A549 (cell line): ENCODE measurements at regions of chr3 and their contacts with region 1.

Region 1: DNA sequence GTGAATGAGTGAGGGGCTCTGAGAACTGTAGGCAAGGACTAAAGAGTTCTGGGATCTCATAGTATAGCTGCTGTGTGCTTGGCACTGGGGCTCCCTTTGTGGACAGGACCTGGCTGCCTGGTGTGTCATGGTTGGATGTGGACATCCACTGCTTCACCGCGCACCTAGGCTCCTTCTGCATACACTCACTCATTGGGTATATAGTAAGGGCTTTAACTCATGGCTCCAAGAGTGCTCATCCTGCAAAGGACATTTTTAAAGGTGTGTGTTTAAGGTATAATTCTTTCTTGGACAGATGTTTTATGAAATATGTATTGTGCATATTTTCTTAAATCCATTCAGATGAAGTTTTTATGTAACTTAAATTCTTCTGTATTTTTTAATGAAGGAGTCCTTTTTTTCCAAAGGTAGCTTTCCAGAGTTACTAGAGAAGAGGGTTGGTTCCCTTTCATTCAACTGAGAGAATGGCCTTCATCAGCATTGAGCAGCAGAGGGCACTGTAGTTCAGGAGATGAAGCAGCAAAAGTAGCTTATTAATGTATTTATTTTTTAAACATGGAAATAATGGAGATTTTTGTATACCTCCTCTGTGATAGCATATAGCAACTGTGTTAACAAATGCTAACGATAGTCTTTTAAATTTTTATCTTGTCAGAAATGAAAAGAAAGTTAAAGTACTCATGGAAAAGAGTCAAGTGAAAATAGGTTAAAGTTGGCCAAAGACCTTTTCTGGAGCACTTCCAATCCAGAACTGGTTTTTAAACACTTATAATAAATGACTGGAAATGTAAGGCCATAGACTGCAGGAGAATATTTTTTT is 25.2 kb downstream of the OXNAD1 start:
- DNase-seq: peak; percentile 27 to 47
- ATAC-seq: peak; percentile 68 to 80; a peak in 4 of 6 replicates
- H3K4me3 ChIP-seq: no peak overlapping the region
- H3K27ac ChIP-seq: 0 out of 6 replicates have a peak overlapping the region, but pooled peaks of 1 of the 2 experiments have one; percentile 20
- H3K4me1 ChIP-seq: no peaks in the 10 kb centered on the region
- CTCF ChIP-seq: peak; percentile 94
- EP300 ChIP-seq: no peak
- POLR2A ChIP-seq: no peak
- RAD21 ChIP-seq: peak; percentile 91 to 92

Region 2: DNA sequence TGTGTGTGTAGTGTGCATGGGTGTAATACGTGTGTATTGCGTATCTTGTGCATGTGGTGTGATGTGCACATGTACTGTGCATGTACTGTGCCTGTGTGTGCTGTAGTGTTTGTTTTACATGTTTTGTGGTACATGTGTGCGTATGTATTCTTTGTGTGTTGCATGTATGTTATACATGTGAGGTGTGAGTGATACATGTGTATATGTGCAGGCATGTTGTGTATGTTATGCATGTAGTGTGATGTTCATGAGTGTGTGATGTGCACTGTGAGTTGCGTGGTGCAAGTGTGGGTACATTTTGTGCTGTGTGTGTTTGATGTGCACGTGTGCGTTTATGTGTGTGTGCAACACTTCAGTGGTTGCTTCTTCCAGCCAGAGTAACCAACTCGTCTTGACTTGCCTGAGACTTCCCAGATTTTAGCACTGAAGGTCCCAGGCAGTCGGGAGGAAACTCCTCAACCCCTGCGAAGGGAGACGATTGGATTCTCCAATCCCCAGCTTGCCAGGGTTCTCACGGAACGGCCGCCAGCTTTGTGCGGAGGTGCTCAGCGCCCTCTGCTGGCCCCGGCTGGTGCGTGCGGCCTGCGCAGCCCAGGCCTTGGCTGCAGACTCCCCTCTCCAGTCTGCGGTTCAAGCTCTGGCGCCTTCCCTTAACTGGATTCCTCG is 112.1 kb before region 1 on chr3:
- CTCF ChIA-PET with region 1: no interaction called
- POLR2A ChIA-PET with region 1: no interaction called
- DNase-seq: peak; percentile 72 to 83
- ATAC-seq: peak; percentile 85 to 95
- H3K4me3 ChIP-seq: no peak overlapping the region
- H3K27ac ChIP-seq: peak overlapping the region; percentile 72 to 75
- H3K4me1 ChIP-seq: peaks cover 17% of the 10 kb centered on the region; the same call in 2 of the 3 replicates
- CTCF ChIP-seq: peak; percentile 95
- EP300 ChIP-seq: no peak
- POLR2A ChIP-seq: no peak
- RAD21 ChIP-seq: peak; percentile 98 to 99

Region 3: DNA sequence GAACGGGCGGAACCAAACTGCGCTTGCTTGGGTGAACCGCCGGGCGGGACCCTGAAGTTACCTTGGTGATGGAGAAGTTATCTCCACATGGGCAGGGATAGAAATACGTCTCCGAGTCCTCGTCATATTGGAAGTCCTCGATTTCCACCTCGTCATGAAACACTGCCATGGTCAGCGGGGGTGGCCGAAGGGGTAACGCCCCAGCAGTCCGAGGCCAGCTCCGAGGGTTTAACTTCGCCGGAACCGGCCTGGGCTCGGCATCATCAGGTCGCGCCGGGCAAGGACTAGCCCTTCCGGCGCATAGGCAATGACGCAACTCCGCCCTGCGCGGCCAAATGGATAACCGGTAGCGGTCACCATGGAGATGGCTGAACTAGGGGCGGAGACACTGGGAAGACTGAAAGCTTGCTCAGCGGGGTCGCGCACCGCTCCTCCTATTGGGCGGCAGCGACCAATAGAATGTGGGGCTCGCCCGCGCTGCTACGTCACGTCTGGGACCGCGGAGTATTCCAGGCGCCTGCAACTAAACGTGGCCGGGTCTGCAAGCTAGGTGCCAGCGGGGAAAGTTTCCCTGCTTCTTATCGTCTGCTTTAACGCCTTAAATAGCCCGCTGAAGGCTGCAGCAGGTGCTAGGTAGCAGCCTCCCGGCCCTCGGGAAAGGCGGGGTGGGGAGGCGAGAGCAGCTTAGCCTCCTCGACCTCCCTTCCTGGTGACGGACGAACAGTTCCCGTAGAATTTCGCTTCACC is 25.3 kb before region 1 on chr3 and contains the starts of genes DPH3 and OXNAD1:
- CTCF ChIA-PET with region 1: interaction called, 12 read pairs
- POLR2A ChIA-PET with region 1: no interaction called
- DNase-seq: peak; percentile 97 to 99
- ATAC-seq: peak; percentile 99
- H3K4me3 ChIP-seq: peak within 1 kb of the TSS; percentile 95
- H3K27ac ChIP-seq: peak within 1 kb of the TSS; percentile 85 to 88
- H3K4me1 ChIP-seq: peaks cover 19% of the 10 kb centered on the region
- CTCF ChIP-seq: no peak
- EP300 ChIP-seq: no peak
- POLR2A ChIP-seq: peak; percentile 75
- RAD21 ChIP-seq: no peak
- polyA plus RNA-seq, gene DPH3: 34.7 and 37.5 TPM in 2 replicates
- polyA plus RNA-seq, gene OXNAD1: 24.2 and 25.9 TPM in 2 replicates

Region 4: DNA sequence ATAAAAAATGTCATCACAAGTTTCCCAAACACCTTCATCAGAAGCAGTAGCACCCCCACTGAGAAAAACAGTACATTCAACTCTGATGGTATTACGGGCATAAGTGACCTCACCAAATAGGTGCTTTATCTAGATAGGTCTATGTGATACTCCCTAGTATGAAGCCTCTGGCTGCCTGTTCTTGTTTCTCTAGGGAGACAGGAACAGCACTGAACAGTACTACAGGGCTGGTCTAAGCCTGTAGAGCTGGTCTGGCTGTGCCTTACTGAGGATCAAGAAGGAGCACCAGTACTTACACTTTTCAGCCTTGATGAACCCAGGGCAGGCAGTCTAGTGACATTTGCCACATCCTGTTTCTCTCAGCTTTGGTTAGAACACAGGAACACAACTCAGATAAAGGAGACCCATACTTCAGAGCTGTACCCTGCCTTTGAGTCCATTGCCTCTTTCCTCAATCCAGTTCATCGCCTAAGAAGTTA is 10.7 kb after region 1 on chr3:
- CTCF ChIA-PET with region 1: interaction called, 16 read pairs
- POLR2A ChIA-PET with region 1: interaction called, 3 read pairs
- DNase-seq: no peak
- ATAC-seq: no peak
- H3K4me3 ChIP-seq: no peak overlapping the region
- H3K27ac ChIP-seq: no peak overlapping the region
- H3K4me1 ChIP-seq: no peaks in the 10 kb centered on the region
- CTCF ChIP-seq: no peak
- EP300 ChIP-seq: no peak
- POLR2A ChIP-seq: no peak
- RAD21 ChIP-seq: no peak

Region 5: GRCh38 chr3:16307826-16308531 is 17.8 kb after region 1 on chr3:
- CTCF ChIA-PET with region 1: interaction called, 14 read pairs
- POLR2A ChIA-PET with region 1: interaction called, 3 read pairs
- DNase-seq: no peak
- ATAC-seq: no peak
- H3K4me3 ChIP-seq: no peak overlapping the region
- H3K27ac ChIP-seq: no peak overlapping the region
- H3K4me1 ChIP-seq: no peaks in the 10 kb centered on the region
- CTCF ChIP-seq: no peak
- EP300 ChIP-seq: no peak
- POLR2A ChIP-seq: no peak
- RAD21 ChIP-seq: no peak

Region 6: DNA sequence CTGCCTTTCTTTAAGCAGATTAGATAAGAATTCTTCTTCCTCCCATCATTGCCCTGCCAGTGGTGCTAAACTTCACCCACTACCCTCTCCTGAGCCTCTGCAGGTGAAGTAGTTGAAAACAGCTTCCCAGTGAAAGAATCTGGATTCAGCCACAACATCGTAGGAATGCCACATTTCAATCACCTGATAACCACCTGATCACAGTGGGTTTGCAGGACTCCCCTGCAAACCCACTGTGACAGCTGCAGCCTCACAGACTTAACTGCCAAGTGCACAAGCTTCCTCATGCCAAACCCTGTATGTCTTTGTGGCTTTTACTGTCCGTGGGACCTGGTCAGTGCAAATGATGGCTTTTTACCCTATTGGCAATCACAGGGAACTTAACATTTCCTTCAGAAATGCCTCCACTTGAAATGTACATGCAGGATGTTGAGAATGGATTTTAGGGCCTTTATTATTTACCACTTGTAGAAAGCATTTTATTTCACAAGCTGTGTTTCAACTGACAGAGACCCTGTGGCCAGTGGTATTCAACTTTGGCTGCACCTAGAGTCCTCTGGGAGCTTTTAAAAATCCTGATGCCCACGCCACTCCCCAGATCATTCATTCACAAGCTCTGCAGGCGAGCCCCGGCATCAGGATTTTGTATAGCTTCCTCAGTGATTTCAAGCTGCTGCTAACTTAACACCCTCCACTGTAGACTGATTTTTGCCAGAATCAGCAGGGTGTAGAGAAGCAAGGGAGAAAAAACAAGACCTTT is 23.8 kb after region 1 on chr3:
- CTCF ChIA-PET with region 1: interaction called, 14 read pairs
- POLR2A ChIA-PET with region 1: no interaction called
- DNase-seq: no peak
- ATAC-seq: no peak
- H3K4me3 ChIP-seq: no peak overlapping the region
- H3K27ac ChIP-seq: no peak overlapping the region
- H3K4me1 ChIP-seq: no peaks in the 10 kb centered on the region
- CTCF ChIP-seq: no peak
- EP300 ChIP-seq: no peak
- POLR2A ChIP-seq: no peak
- RAD21 ChIP-seq: no peak

Region 7: DNA sequence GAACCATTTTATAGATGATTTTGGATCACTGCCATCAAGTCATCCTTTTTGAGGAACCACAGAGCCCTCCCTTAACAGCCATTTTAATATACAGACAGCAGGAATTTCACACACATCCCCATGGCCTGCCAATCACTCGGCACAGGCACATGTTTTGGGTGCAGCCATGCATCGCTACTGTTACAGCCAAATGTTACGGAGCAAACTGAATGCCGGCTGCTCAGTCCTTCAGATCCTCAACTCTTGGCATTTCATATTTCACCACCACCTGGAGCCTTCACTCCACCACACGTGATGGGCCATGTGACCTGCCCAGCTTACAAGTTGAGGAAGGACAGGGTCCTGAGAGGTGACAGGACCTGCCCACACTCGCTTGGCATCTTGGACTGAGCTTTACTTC is 65.6 kb after region 1 on chr3:
- CTCF ChIA-PET with region 1: no interaction called
- POLR2A ChIA-PET with region 1: no interaction called
- DNase-seq: no peak
- ATAC-seq: no peak
- H3K4me3 ChIP-seq: no peak overlapping the region
- H3K27ac ChIP-seq: no peak overlapping the region
- H3K4me1 ChIP-seq: no peaks in the 10 kb centered on the region
- CTCF ChIP-seq: no peak
- EP300 ChIP-seq: no peak
- POLR2A ChIP-seq: no peak
- RAD21 ChIP-seq: no peak

Region 8: DNA sequence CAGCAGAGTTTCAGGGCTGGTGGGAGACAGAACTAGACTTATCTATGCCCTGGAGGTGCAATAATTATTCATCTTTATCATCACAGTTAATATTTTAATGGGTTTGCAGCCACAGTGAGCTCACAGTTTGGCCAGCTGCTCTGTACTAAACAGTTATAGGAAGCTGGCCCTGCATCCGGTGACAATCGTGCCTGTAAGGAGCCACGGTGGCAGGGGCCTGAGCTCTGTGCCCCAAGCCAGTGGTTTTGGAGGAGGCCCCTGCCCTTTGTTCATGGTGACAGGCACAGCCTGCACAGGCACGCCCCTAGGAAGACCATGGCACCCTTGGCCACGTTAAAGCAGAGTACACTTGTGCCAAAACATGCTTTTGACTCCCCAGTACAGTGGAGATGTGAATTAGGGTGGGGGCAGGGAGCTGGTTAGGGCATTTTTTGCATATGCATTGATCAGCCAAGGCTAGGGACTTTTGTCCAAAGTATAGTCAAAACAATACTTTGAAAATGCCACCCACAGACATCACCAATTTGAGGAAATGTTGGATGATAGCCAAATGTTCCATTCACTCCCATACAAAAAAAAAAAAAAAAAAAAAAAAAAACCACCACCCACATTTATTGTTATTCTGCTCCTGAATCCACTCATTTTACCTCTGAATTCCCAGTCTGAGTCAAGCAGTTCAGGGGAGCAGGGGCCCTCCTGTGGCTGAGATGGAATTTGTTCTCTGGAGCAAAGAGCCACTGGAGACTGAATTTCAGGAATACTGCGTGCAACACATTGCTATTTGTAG is 226.7 kb after region 1 on chr3:
- CTCF ChIA-PET with region 1: interaction called, 62 read pairs
- POLR2A ChIA-PET with region 1: no interaction called
- DNase-seq: peak; percentile 38
- ATAC-seq: peak; percentile 55 to 70; a peak in 4 of 6 replicates
- H3K4me3 ChIP-seq: no peak overlapping the region
- H3K27ac ChIP-seq: no peak overlapping the region
- H3K4me1 ChIP-seq: no peaks in the 10 kb centered on the region
- CTCF ChIP-seq: peak; percentile 49
- EP300 ChIP-seq: no peak
- POLR2A ChIP-seq: no peak
- RAD21 ChIP-seq: peak; percentile 60 to 65

Region 9: DNA sequence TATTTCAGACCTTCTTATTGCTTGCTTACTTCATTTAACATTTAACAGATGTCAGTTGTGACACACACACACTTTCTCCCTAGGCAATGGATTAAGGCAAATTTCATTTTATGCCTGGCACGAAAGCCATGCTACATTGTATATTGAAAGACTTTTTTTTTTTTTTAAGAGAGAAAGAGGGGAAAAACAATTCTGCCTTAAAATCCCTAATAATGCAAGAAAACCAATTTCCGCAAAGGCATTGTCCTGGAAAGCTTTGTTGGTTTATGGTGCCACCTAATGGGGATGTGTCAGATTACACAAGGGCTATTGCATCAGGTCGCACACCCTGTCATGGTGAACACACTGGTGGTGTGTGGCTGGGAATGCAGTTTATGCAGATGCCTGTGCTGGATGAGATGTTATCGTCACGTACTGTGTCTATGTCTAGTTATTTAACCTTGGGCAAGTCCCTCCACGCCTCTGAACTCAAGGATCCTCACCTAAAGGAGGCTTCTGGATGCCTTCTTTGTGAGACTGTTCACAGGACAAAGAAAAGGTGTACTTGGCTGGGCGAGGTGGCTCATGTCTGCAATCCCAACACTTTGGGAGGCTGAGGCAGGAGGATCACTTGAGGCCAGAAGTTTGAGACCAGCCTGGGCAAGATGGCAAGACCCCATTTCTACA is 260.6 kb after region 1 on chr3:
- CTCF ChIA-PET with region 1: interaction called, 78 read pairs
- POLR2A ChIA-PET with region 1: no interaction called
- DNase-seq: peak; percentile 67 to 85
- ATAC-seq: peak; percentile 99
- H3K4me3 ChIP-seq: no peak overlapping the region
- H3K27ac ChIP-seq: peak overlapping the region; percentile 63 to 85; a peak in 5 of 6 replicates
- H3K4me1 ChIP-seq: 0 out of 3 replicates have a peak, but pooled peaks cover 4% of the 10 kb centered on the region
- CTCF ChIP-seq: peak; percentile 94
- EP300 ChIP-seq: no peak
- POLR2A ChIP-seq: no peak
- RAD21 ChIP-seq: peak; percentile 96 to 97